Mammary epithelial cell (primary cell): ENCODE measurements at regions of chr7 and their contacts with region 1.

Region 1: GRCh38 chr7:30694218-30694745 is 12.0 kb upstream of the CRHR2 start:
- DNase-seq: no peak
- H3K4me3 ChIP-seq: no peak overlapping the region
- H3K27ac ChIP-seq: no peak overlapping the region
- H3K4me1 ChIP-seq: no peaks in the 10 kb centered on the region
- H3K27me3 ChIP-seq: no peaks in the 10 kb centered on the region
- CTCF ChIP-seq: no peak

Region 2: GRCh38 chr7:30650421-30650808 is 43.9 kb before region 1 on chr7:
- CTCF ChIA-PET with region 1: no interaction called
- dilution Hi-C with region 1: loop called (anchors 5 kb)
- in situ Hi-C with region 1: no loop called
- intact Hi-C with region 1: no loop called
- DNase-seq: no peak
- H3K4me3 ChIP-seq: no peak overlapping the region
- H3K27ac ChIP-seq: no peak overlapping the region
- H3K4me1 ChIP-seq: no peaks in the 10 kb centered on the region
- H3K27me3 ChIP-seq: no peaks in the 10 kb centered on the region
- CTCF ChIP-seq: no peak

Region 3: DNA sequence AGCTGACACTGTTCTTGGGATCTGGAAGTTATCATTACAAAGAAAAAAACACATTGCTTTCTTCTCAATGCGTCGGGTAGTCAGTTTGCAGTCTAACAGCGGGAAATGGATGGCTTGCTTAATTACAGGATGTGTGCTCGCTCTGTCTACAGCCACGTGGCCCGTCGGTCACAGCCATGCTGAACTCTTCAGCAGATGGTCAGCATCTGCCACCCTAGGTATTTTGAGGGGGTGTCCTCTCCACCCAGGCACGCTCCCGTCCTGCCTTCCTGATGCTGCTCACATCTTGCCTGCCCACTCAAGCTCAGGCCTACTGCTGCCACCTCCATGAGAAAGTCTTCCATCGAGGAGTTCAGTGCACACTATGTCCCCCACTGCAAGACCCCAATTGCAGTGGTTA is 37.3 kb after region 1 on chr7:
- CTCF ChIA-PET with region 1: no interaction called
- dilution Hi-C with region 1: loop called (anchors 5 kb)
- in situ Hi-C with region 1: no loop called
- intact Hi-C with region 1: no loop called
- DNase-seq: no peak
- H3K4me3 ChIP-seq: no peak overlapping the region
- H3K27ac ChIP-seq: no peak overlapping the region
- H3K4me1 ChIP-seq: no peaks in the 10 kb centered on the region
- H3K27me3 ChIP-seq: no peaks in the 10 kb centered on the region
- CTCF ChIP-seq: no peak

Region 4: GRCh38 chr7:30789334-30789711 is 95.0 kb after region 1 on chr7:
- CTCF ChIA-PET with region 1: no interaction called
- dilution Hi-C with region 1: no loop called
- in situ Hi-C with region 1: no loop called
- intact Hi-C with region 1: no loop called
- DNase-seq: peak; percentile 85
- H3K4me3 ChIP-seq: no peak overlapping the region
- H3K27ac ChIP-seq: no peak overlapping the region
- H3K4me1 ChIP-seq: peaks cover 13% of the 10 kb centered on the region
- H3K27me3 ChIP-seq: no peaks in the 10 kb centered on the region
- CTCF ChIP-seq: no peak

Region 5: DNA sequence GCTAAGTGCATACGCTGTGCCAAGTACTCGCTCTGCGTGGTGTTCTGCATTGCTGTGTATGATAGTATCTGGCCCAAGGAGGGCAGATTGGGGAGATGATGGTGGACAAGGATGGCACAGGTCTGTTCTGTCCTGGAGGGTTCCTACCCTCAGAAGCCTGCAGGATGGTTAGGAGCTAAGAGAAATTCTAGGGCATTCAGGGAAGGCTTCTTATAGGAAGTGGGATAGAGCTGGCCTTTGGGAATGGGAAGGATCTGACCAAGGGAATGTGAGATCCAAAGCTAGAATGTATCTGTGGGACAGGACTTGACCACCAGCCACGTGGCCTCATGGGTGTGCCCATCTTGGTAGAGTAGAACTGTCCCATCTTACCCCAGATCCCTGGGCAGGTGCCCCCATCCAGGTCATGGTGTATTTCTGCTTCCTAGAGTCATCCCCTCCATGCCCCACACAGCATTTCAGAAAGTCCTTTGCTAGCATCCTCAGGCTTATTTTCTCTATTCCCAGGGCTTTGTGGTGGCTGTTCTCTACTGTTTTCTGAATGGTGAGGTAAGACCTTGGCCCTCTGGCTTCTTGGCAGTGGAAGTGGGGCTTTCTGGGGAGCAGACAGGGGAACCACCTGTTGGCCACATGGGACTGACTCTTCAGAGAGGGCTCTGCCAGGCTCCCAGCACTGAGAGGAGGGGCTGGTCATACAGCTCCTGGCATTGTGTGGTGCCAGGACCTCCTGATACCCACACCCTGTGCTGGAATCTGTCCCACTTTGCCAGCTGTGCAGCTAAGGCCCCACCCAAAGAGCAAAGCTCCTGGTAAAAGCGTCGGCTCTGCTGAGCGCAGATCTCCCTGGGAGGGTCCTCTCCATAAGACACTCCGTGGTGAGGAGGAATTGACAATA is 410.3 kb after region 1 on chr7:
- CTCF ChIA-PET with region 1: no interaction called
- dilution Hi-C with region 1: no loop called
- in situ Hi-C with region 1: no loop called
- intact Hi-C with region 1: no loop called
- DNase-seq: no peak
- H3K4me3 ChIP-seq: no peak overlapping the region
- H3K27ac ChIP-seq: no peak overlapping the region
- H3K4me1 ChIP-seq: no peaks in the 10 kb centered on the region
- H3K27me3 ChIP-seq: no peaks in the 10 kb centered on the region
- CTCF ChIP-seq: no peak

Region 6: GRCh38 chr7:31151849-31152248 is 457.6 kb after region 1 on chr7:
- CTCF ChIA-PET with region 1: no interaction called
- dilution Hi-C with region 1: no loop called
- in situ Hi-C with region 1: no loop called
- intact Hi-C with region 1: no loop called
- DNase-seq: no peak
- H3K4me3 ChIP-seq: no peak overlapping the region
- H3K27ac ChIP-seq: no peak overlapping the region
- H3K4me1 ChIP-seq: no peaks in the 10 kb centered on the region
- H3K27me3 ChIP-seq: no peaks in the 10 kb centered on the region
- CTCF ChIP-seq: no peak